Esophagus muscularis mucosa (tissue), 4 donors: ENCODE measurements at regions of chr5 and their contacts with region 1.

Region 1: DNA sequence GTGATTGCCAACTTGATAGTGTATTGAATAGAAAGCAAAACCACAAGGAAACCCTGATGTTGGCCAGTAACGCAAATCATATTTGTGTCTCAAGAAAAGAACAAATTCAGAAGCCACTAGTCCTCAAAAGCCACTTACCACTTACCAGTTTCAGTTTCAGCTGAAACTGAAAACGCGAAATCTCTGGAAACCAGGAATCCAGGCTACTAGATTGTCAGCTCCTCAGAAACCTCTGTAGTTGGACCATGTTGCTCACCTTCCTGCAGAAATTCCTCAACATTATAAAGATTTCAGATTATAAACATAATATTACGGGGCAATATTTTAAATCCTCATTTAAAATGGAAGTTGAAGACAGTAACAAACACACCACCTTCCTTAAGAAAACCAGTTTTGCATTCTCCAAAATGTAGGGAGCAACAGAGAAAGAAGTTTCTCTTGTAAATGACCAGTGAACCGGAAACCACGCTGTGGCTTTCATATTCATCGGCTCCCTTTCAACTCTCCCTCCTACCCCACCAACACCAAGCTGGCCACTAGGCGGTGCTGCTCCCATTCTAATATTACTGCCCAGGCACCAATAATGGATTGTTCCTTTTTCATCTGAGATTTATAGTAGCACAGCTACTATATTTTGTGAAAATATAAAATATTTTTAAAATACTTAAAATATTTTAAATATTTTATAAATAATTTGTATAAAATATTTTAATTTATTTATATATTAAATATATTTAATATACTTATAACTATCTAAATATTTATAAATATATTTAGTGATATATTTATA is 8.7 kb upstream of the TMED7 start:
- DNase-seq: peak; percentile 97
- H3K4me3 ChIP-seq: peak overlapping the region; percentile 15 to 45 (median 40)
- H3K27ac ChIP-seq: peak overlapping the region; percentile 32 to 65 (median 56)
- H3K4me1 ChIP-seq: peaks cover 5 to 12% (median 6%) of the 10 kb centered on the region in 4 donors
- H3K27me3 ChIP-seq: no peaks in the 10 kb centered on the region
- CTCF ChIP-seq: peak; percentile 83 to 91 (median 90)
- EP300 ChIP-seq: no peak
- POLR2A ChIP-seq: no peak

Region 2: GRCh38 chr5:115246361-115246991 is 388.1 kb before region 1 on chr5:
- intact Hi-C with region 1: no loop called
- DNase-seq: no peak
- H3K4me3 ChIP-seq: no peak overlapping the region
- H3K27ac ChIP-seq: no peak overlapping the region
- H3K4me1 ChIP-seq: peaks cover 10 to 31% (median 23%) of the 10 kb centered on the region in 4 donors
- H3K27me3 ChIP-seq: no peaks in the 10 kb centered on the region
- CTCF ChIP-seq: peak; percentile 63 to 74 (median 64)
- EP300 ChIP-seq: no peak
- POLR2A ChIP-seq: no peak

Region 3: DNA sequence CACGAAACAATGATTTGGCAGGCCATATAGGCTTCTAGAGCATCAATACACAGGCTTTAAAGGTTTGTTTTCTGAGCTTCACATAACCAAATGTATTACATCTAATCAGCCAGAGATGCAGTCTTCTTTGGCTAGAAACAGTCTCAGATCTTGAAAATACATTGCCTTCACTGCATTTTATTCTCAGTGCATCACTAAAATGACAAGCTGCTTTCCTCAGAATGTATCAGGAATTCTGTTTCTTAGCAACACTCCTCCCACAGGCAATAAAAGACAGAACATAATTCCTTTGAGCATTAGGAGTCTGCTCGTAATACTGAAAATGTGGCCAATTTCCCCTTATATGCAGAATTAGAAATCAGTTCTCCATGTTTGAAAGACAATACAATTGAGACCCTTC is 126.9 kb before region 1 on chr5:
- intact Hi-C with region 1: no loop called
- DNase-seq: no peak
- H3K4me3 ChIP-seq: no peak overlapping the region
- H3K27ac ChIP-seq: peak overlapping the region in 1 of 4 donors; percentile 23
- H3K4me1 ChIP-seq: peaks cover 0 to 14% (median 9%) of the 10 kb centered on the region in 4 donors
- H3K27me3 ChIP-seq: no peaks in the 10 kb centered on the region
- CTCF ChIP-seq: no peak
- EP300 ChIP-seq: no peak
- POLR2A ChIP-seq: no peak

Region 4: DNA sequence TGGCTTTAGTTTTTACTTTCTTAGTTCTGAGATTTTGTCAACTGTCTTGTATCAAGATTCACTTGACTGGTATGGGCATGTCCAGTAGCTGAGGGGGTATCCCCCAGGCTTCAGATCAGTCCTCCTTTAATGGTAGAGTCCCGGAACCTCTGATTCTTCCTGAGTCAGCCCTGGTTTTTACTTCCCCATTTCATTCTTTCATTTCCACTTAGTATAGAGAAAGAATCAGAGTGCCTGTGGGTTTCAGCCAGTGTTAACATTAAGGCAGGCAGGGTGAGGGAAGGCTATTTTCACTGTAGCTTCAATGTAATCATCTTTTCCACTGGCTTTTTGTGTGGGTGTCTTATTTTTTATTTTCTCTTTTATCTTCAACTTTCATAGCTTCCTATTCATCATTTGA is 442.0 kb after region 1 on chr5:
- intact Hi-C with region 1: loop called (anchors 5 kb)
- DNase-seq: no peak
- H3K4me3 ChIP-seq: no peak overlapping the region
- H3K27ac ChIP-seq: no peak overlapping the region
- H3K4me1 ChIP-seq: no peaks in the 10 kb centered on the region
- H3K27me3 ChIP-seq: no peaks in the 10 kb centered on the region
- CTCF ChIP-seq: no peak
- EP300 ChIP-seq: no peak
- POLR2A ChIP-seq: no peak